ENCODE measurements at regions of chr3 and their contacts with region 1.

Region 1: DNA sequence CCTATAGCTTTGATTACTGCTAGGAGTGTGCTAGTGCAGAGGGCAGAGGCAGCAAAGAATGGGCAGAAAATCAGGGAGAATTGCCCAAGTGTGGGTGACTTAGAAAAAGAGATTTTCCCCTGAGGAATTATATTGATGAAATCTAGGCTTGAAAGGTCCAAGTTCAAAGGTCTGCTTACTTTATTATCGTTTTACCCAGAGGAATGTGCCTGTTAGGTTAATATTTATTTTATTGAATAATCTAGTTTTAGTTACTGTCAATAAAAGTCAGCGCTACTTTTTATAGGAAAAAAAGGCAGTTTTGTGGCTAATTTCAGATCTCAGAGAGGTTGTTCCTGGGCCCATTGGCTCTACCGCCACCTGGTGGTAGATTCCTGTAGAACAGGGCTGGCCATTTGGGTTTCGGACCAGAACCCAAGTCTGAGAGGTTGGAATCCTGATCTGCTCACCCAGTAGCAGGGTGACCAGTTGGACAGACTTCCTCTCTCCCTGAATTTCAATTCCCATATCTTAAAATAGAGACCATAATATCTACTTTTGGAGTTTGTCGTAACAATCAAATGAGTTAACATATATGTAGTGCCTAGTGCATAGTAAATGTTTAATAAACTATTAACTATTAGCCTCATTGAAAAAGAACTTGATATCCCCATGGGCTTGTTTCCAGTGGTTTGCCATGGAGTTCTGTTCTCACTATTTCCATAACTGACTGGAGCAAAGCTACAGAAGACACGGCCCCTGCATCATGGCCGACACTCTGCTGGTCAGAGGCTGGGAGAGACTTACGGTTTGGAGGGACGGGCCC is 62.7 kb upstream of the ZNF148 start:
- DNase-seq: peak; percentile 31 to 73 (median 67)
- H3K4me3 ChIP-seq: no peak overlapping the region
- H3K27ac ChIP-seq: no peak overlapping the region
- H3K4me1 ChIP-seq: no peaks in the 10 kb centered on the region
- H3K27me3 ChIP-seq: no peaks in the 10 kb centered on the region
- CTCF ChIP-seq: peak; percentile 71 to 91 (median 80)
- EP300 ChIP-seq: no peak
- POLR2A ChIP-seq: no peak

Region 2: GRCh38 chr3:124761250-124761796 is 676.5 kb before region 1 on chr3:
- intact Hi-C with region 1: loop called in 2 of 4 experiments (anchors 5 to 10 kb)
- DNase-seq: peak; percentile 83 to 94 (median 90)
- H3K4me3 ChIP-seq: no peak overlapping the region
- H3K27ac ChIP-seq: peak overlapping the region in 1 of 2 donors; percentile 33
- H3K4me1 ChIP-seq: no peaks in the 10 kb centered on the region
- H3K27me3 ChIP-seq: no peaks in the 10 kb centered on the region
- CTCF ChIP-seq: peak; percentile 89 to 96 (median 94)
- EP300 ChIP-seq: no peak
- POLR2A ChIP-seq: no peak

Region 3: DNA sequence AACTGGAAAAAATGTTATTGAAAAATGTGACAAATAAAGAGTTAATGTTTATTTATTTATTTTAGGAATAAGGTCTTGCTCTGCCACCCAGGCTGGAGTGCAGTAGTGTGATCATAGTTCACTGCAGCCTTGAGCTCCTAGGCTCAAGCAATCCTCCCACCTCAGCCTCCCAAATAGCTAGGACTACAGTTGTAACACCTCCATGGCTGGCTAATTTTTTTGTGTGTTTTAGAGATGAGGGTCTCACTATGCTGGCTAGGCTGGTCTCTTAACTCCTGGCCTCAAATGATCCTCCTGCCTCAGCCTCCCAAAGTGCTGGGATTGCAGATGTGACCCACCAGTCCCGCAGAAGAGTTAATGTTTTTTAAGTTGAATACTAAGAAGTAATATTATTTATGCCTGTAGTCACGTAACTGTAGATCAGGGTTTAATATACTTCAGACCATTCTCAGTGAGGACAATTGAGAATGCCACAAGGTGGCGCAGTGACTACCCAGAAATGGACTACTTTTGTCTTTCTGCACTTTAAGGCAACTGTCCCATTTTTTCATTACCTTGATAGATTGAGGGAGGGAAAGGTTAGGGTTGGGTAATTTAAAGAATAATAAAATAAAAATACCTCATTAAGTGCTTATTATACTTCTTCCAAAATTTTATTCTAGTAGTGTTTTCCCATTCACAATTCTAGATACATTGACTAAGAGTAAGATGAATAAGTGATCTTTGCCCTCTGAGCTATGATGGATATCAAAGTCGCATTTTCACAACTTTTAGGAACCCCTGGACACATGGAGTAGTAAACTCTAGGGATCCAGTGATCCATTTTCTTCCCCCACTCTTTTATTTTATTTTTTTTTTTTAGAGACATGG is 509.3 kb before region 1 on chr3:
- intact Hi-C with region 1: loop called in 3 of 4 experiments (anchors 2 to 10 kb)
- DNase-seq: peak; percentile 24 to 69 (median 49)
- H3K4me3 ChIP-seq: no peak overlapping the region
- H3K27ac ChIP-seq: no peak overlapping the region
- H3K4me1 ChIP-seq: no peaks in the 10 kb centered on the region
- H3K27me3 ChIP-seq: no peaks in the 10 kb centered on the region
- CTCF ChIP-seq: peak; percentile 16 to 68 (median 53)
- EP300 ChIP-seq: no peak
- POLR2A ChIP-seq: no peak

Region 4: DNA sequence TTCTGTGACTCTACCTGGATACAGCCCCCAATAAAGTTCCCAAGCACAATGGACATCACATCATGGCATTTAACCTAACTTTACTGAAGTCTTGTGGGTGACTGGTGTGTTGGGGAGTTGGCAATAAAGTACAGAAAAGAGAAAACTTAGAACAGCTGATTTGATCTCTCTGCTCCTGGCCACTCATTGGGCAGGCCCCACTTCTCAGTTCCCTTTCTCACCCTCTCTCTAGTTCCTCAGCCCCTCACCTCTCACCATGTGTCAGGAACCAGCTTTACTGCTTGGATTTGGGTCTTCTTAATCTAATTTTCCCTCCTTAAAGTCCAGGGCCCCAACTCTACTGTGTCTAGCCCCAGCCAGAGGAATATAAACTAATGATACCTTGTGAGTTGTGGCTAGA is 502.6 kb before region 1 on chr3:
- intact Hi-C with region 1: loop called in 2 of 4 experiments (anchors 5 to 10 kb)
- DNase-seq: no peak
- H3K4me3 ChIP-seq: no peak overlapping the region
- H3K27ac ChIP-seq: no peak overlapping the region
- H3K4me1 ChIP-seq: no peaks in the 10 kb centered on the region
- H3K27me3 ChIP-seq: no peaks in the 10 kb centered on the region
- CTCF ChIP-seq: no peak
- EP300 ChIP-seq: no peak
- POLR2A ChIP-seq: no peak

Region 5: GRCh38 chr3:124995460-124995994 is 442.3 kb before region 1 on chr3:
- intact Hi-C with region 1: loop called (anchors 2 to 5 kb)
- DNase-seq: peak; percentile 44 to 69 (median 62)
- H3K4me3 ChIP-seq: no peak overlapping the region
- H3K27ac ChIP-seq: no peak overlapping the region
- H3K4me1 ChIP-seq: no peaks in the 10 kb centered on the region
- H3K27me3 ChIP-seq: no peaks in the 10 kb centered on the region
- CTCF ChIP-seq: peak; percentile 56 to 75 (median 60)
- EP300 ChIP-seq: no peak
- POLR2A ChIP-seq: no peak

Region 6: GRCh38 chr3:125003369-125003853 is 434.4 kb before region 1 on chr3:
- intact Hi-C with region 1: loop called (anchors 2 to 5 kb)
- DNase-seq: peak; percentile 50 to 70 (median 52)
- H3K4me3 ChIP-seq: no peak overlapping the region
- H3K27ac ChIP-seq: no peak overlapping the region
- H3K4me1 ChIP-seq: peaks cover 6% of the 10 kb centered on the region
- H3K27me3 ChIP-seq: no peaks in the 10 kb centered on the region
- CTCF ChIP-seq: no peak
- EP300 ChIP-seq: no peak
- POLR2A ChIP-seq: no peak

Region 7: DNA sequence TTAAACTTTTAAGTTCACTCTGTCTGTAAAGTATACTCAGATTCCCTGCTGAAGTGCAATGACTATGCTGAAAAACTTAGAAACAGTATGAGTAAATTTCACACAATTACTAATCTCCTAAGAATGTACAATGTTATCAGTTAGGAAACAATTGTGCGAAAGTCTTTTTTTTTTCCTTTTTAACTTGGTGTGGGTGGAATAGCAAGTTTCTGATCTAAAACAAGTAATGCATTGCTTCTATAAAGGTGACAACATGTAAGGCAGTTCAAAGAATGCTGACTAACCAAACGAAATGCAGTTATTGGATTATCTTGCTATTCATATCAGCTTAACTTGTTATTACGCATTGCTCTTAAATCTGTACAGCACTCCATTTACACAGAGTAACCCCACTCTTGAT is 205.9 kb before region 1 on chr3:
- intact Hi-C with region 1: loop called in 1 of 4 experiments (anchors 10 kb)
- DNase-seq: no peak
- H3K4me3 ChIP-seq: no peak overlapping the region
- H3K27ac ChIP-seq: no peak overlapping the region
- H3K4me1 ChIP-seq: no peaks in the 10 kb centered on the region
- H3K27me3 ChIP-seq: no peaks in the 10 kb centered on the region
- CTCF ChIP-seq: no peak
- EP300 ChIP-seq: no peak
- POLR2A ChIP-seq: no peak